ENCODE measurements at regions of chr22 and their contacts with region 1.

Region 1: DNA sequence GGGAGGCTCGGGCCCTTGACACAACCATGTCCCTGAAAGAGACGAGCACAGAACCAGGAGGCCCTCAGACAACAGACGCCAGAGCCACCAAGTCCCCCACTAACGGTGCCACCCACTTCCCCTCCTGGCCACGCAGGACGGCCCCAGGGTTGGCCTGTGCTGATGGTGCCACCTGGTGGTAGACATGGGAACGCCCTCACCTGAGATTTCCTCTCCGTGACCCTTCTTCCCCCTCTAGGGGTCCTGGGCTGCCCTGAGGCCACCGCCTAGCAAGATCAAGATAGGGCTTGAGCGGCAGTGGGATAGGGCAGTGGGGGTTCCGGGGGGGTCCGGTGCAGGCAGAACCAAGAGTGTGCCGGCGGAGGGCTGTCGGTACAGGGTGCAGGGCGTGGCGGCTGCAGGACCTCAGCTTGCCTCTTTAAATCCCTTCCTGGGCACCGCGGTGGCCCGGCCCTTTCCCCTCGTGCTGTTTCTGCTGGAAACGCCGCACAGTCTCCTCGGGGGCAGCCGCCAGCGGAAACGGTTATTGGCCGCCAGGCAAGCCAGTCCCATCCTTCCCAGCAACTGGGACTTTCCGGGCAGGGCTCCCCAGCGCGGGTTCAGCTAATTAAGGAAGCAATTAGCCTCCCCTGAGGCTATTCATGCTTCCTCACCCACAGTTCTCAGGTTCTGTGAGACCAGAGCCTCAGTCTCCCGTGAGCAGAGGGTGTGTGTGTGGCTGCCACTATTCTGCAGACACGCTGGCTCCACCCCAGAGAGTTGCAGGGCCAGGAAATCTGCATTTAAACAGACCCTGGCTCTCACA is 5.5 kb upstream of the NFAM1 start:
- DNase-seq: peak; percentile 76
- ATAC-seq: peak; percentile 88
- H3K4me3 Mint-ChIP-seq: peak overlapping the region; percentile 81
- H3K27ac Mint-ChIP-seq: peak overlapping the region; percentile 46
- H3K4me1 Mint-ChIP-seq: peaks cover 37% of the 10 kb centered on the region
- H3K27me3 Mint-ChIP-seq: peaks cover 25% of the 10 kb centered on the region
- CTCF ChIP-seq: peak; percentile 59

Region 2: GRCh38 chr22:41966607-41967240 is 471.0 kb before region 1 on chr22:
- CTCF ChIA-PET with region 1: interaction called, 13 read pairs
- POLR2A ChIA-PET with region 1: no interaction called
- intact Hi-C with region 1: loop called (anchors 1 kb)
- DNase-seq: no peak
- ATAC-seq: peak; percentile 89
- H3K4me3 Mint-ChIP-seq: no peak overlapping the region
- H3K27ac Mint-ChIP-seq: no peak overlapping the region
- H3K4me1 Mint-ChIP-seq: no peaks in the 10 kb centered on the region
- H3K27me3 Mint-ChIP-seq: peaks cover 10% of the 10 kb centered on the region
- CTCF ChIP-seq: no peak

Region 3: GRCh38 chr22:42269407-42270177 is 168.1 kb before region 1 on chr22:
- CTCF ChIA-PET with region 1: no interaction called
- POLR2A ChIA-PET with region 1: no interaction called
- intact Hi-C with region 1: loop called (anchors 2 kb)
- DNase-seq: peak; percentile 60
- ATAC-seq: peak; percentile 55
- H3K4me3 Mint-ChIP-seq: peak overlapping the region; percentile 82
- H3K27ac Mint-ChIP-seq: peak overlapping the region; percentile 79
- H3K4me1 Mint-ChIP-seq: peaks cover 34% of the 10 kb centered on the region
- H3K27me3 Mint-ChIP-seq: no peaks in the 10 kb centered on the region
- CTCF ChIP-seq: no peak

Region 4: DNA sequence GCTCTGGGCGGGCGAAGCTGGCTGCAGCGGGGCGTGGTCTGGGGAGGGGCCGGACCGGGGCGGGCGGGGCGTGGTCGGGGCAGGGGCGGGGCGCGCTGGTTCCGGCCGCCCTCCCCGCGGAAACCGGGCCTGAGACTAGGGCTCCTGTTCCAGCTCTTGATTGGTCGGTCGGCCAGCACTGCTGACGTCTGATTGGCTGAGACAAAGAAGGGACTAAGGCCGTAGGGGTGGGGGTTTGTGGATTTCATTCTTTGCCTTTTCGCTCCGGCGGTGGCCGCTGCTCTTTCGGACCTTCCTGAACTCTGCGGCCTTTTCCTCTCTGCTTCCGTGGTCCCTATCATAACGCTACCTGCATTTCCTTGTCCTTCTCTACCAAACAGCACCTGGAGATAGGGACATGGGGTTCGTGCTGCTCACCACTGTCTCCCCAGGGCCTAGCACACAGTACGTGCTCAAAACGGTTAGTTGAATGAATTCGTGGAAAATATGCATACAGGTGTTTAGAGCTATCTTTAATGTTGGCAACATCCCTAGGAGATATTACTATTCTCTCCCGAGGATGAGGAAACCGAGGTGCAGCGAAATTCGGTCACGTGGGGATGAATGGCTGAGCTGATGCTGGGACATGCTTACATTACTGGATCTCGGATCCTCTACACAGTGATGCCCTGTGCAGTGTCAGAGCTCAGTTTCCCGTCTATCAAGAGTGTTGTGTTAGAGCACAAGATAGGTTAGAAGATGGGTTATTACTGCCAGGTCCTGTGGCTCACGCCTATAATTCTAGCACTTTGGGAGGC is 68.2 kb before region 1 on chr22:
- CTCF ChIA-PET with region 1: no interaction called
- POLR2A ChIA-PET with region 1: no interaction called
- intact Hi-C with region 1: loop called (anchors 2 kb)
- DNase-seq: peak; percentile 73
- ATAC-seq: peak; percentile 97
- H3K4me3 Mint-ChIP-seq: peak overlapping the region; percentile 88
- H3K27ac Mint-ChIP-seq: peak overlapping the region; percentile 42
- H3K4me1 Mint-ChIP-seq: peaks cover 18% of the 10 kb centered on the region
- H3K27me3 Mint-ChIP-seq: peaks cover 35% of the 10 kb centered on the region
- CTCF ChIP-seq: no peak

Region 5: DNA sequence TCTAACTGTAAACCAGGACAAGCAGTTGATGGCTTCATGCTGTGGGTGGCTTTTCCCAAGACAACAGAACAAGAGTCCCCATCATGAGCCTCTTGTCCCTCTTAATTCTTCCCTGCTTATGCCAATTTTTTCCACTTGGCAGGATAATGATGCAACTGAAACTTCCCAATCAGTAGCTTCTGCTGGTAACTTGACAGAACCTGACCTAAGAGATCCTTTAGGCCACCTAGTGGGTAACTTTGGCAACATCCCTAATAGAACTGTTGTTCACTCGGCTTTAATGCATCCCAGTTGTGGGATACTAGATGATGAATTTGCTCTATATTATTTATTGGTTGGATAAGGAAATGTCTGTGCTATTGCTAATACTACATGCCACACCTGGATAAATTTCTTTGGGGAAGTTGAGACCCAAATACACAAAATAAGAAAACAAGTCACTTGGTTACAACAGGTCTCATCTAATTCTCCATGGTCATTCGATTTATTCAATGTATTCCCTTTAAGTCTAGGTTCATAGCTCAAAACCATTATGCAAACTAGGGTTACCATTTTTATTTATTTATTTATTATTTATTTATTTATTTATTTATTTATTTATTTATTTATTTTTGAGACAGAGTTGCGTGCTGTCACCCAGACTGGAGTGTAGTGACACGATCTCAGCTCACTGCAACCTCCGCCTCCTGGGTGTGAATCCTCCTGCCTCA is 35.9 kb after region 1 on chr22:
- CTCF ChIA-PET with region 1: interaction called, 13 read pairs
- POLR2A ChIA-PET with region 1: interaction called, 4 read pairs
- intact Hi-C with region 1: loop called (anchors 5 kb)
- DNase-seq: no peak
- ATAC-seq: peak; percentile 64
- H3K4me3 Mint-ChIP-seq: no peak overlapping the region
- H3K27ac Mint-ChIP-seq: no peak overlapping the region
- H3K4me1 Mint-ChIP-seq: peaks cover 3% of the 10 kb centered on the region
- H3K27me3 Mint-ChIP-seq: peaks cover 3% of the 10 kb centered on the region
- CTCF ChIP-seq: peak; percentile 76